H1 (cell line): ENCODE measurements at regions of chr12 and their contacts with region 1.

Region 1: DNA sequence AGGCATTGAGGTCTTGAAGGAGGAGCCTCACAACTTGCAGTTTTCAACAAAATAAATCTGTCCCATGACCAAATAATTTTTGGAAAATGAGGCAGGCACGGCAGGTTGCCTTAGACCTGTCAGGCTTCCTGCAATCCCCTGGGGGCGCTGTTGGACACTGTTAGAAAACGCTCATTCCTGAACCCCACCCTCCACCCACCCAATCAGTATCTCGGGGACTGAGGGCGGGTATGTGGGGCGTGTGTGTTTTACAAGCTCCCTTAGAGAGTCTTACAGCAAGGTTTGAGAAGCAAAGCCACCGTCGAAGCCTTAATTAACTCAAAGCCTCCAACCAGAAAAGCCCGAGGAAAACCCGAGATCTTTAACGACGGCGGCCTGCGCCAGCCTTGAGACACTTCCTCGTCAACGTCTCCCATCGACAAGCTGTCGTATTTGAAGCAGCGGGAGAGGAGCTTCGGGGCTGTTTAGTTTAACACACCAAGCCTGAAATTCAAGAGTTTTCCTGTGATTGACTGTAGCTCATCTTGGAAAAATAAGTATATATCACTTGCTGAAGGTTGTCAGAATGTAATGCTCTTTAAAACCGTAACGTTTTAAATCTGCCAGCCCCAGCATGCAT is 123.0 kb downstream of the GLT1D1 start:
- DNase-seq: peak; percentile 53 to 82
- H3K4me3 ChIP-seq: peak overlapping the region; percentile 10 to 57 (median 24); a peak in 4 of 8 replicates
- H3K27ac ChIP-seq: no peak overlapping the region
- H3K4me1 ChIP-seq: peaks cover 3 to 26% (median 11%) of the 10 kb centered on the region in 4 experiments; a peak in 6 of 7 replicates
- H3K27me3 ChIP-seq: peaks cover 0 to 6% (median 3%) of the 10 kb centered on the region in 4 experiments; a peak in 4 of 7 replicates
- CTCF ChIP-seq: peak; percentile 72 to 76 (median 76)
- EP300 ChIP-seq: no peak
- POLR2A ChIP-seq: no peak
- RAD21 ChIP-seq: peak; percentile 76 to 79

Region 2: DNA sequence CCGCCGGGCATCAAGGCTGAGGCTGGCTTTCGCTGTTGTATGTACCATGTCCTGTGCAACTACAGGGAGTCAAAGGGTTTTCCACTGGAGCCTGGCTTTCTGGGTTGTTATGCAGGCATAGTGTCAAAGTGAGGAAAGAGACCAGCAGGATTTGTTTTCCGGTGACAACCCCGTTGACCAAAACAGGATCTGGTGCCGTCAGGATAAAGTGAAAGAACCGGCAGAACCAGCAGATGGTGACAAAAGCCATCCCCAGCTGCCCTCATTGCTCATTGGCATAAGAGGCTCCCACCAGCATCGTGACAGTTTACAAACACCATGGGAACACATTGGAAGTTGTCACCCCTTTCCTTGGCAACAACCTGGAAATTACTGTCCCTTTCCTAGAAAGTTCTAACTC is 233.2 kb before region 1 on chr12:
- CTCF ChIA-PET with region 1: no interaction called
- POLR2A ChIA-PET with region 1: no interaction called
- DNase-seq: no peak
- H3K4me3 ChIP-seq: no peak overlapping the region
- H3K27ac ChIP-seq: no peak overlapping the region
- H3K4me1 ChIP-seq: no peaks in the 10 kb centered on the region
- H3K27me3 ChIP-seq: no peaks in the 10 kb centered on the region
- CTCF ChIP-seq: no peak
- EP300 ChIP-seq: no peak
- POLR2A ChIP-seq: no peak
- RAD21 ChIP-seq: peak in 1 of 2 experiments; percentile 34; a peak in 2 of 4 replicates

Region 3: DNA sequence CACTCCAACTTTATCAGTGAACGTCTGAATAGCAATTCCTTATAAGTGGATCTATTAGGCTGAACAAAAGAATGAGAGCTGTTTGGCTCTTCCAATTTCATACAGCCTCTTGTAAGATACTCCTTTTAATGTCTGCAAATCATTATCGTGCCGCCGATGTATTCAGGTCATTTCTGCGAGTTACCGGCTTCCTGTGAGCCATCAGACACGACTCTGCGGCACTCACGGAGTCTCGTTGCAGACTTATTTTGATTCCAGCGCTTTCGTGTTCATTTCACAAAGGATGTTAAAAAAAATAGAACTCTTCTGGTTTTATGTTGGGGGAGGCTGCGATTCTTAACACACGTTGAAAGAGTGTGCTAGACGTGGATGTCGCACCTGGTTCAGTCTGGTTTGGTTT is 16.3 kb before region 1 on chr12:
- CTCF ChIA-PET with region 1: interaction called, 26 read pairs
- POLR2A ChIA-PET with region 1: no interaction called
- DNase-seq: no peak
- H3K4me3 ChIP-seq: no peak overlapping the region
- H3K27ac ChIP-seq: no peak overlapping the region
- H3K4me1 ChIP-seq: peaks cover 0 to 9% (median 4%) of the 10 kb centered on the region in 4 experiments; a peak in 3 of 7 replicates
- H3K27me3 ChIP-seq: no peaks in the 10 kb centered on the region; a peak in 1 of 7 replicates
- CTCF ChIP-seq: no peak
- EP300 ChIP-seq: no peak
- POLR2A ChIP-seq: no peak
- RAD21 ChIP-seq: no peak

Region 4: GRCh38 chr12:128994854-128995253 is 18.6 kb after region 1 on chr12:
- CTCF ChIA-PET with region 1: interaction called, 22 read pairs
- POLR2A ChIA-PET with region 1: no interaction called
- DNase-seq: no peak
- H3K4me3 ChIP-seq: no peak overlapping the region
- H3K27ac ChIP-seq: no peak overlapping the region
- H3K4me1 ChIP-seq: no peaks in the 10 kb centered on the region
- H3K27me3 ChIP-seq: no peaks in the 10 kb centered on the region; a peak in 1 of 7 replicates
- CTCF ChIP-seq: no peak
- EP300 ChIP-seq: no peak
- POLR2A ChIP-seq: no peak
- RAD21 ChIP-seq: no peak

Region 5: DNA sequence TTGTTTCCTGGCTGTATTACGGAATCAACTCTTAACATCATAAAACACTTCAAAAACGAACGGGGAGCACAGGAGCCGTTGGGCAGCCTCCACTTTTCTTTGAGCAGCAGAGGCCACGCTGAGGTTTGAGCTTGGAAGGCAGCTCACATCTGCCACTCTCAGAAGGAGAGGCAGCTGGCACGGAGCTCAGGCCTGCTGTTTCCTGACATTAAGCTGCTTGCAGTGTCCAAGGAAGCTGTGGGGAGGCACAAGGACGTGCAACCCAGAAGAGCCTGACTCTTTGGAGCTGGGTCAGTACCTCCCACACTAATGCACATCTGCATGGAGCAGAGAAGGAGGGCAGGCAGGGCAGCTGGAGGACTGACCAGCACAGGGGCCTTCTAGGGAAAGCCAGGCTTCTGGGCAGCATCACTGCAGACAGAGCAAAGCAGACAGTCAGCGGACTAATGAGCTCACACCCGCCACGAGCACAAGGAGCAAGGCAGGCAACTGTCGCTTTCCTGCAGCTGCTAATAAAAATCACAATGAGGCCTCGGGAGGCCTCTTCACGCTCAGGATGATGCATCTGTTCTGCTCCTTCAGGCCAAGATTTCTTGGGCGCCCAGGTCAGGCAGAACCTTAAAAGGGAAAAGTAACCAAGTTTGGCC is 88.1 kb after region 1 on chr12:
- CTCF ChIA-PET with region 1: interaction called, 14 read pairs
- POLR2A ChIA-PET with region 1: no interaction called
- DNase-seq: no peak
- H3K4me3 ChIP-seq: no peak overlapping the region
- H3K27ac ChIP-seq: no peak overlapping the region
- H3K4me1 ChIP-seq: peaks cover 0 to 5% (median 2%) of the 10 kb centered on the region in 4 experiments; a peak in 3 of 7 replicates
- H3K27me3 ChIP-seq: no peaks in the 10 kb centered on the region; a peak in 1 of 7 replicates
- CTCF ChIP-seq: no peak
- EP300 ChIP-seq: no peak
- POLR2A ChIP-seq: no peak
- RAD21 ChIP-seq: no peak

Region 6: GRCh38 chr12:129069886-129070285 is 93.7 kb after region 1 on chr12:
- CTCF ChIA-PET with region 1: interaction called, 14 read pairs
- POLR2A ChIA-PET with region 1: no interaction called
- DNase-seq: peak in 1 of 2 experiments; percentile 79
- H3K4me3 ChIP-seq: no peak overlapping the region
- H3K27ac ChIP-seq: no peak overlapping the region
- H3K4me1 ChIP-seq: peaks cover 0 to 3% (median 2%) of the 10 kb centered on the region in 4 experiments; a peak in 2 of 7 replicates
- H3K27me3 ChIP-seq: no peaks in the 10 kb centered on the region; a peak in 2 of 7 replicates
- CTCF ChIP-seq: peak; percentile 54 to 87 (median 66)
- EP300 ChIP-seq: no peak
- POLR2A ChIP-seq: no peak
- RAD21 ChIP-seq: peak; percentile 69 to 73

Region 7: GRCh38 chr12:129162805-129163204 is 186.6 kb after region 1 on chr12:
- CTCF ChIA-PET with region 1: interaction called, 12 read pairs
- POLR2A ChIA-PET with region 1: no interaction called
- DNase-seq: no peak
- H3K4me3 ChIP-seq: no peak overlapping the region
- H3K27ac ChIP-seq: no peak overlapping the region
- H3K4me1 ChIP-seq: peaks cover 0 to 6% (median under 1%) of the 10 kb centered on the region in 4 experiments; a peak in 2 of 7 replicates
- H3K27me3 ChIP-seq: no peaks in the 10 kb centered on the region
- CTCF ChIP-seq: peak; percentile 3 to 47 (median 37); a peak in 2 of 4 replicates
- EP300 ChIP-seq: no peak
- POLR2A ChIP-seq: no peak
- RAD21 ChIP-seq: peak in 1 of 2 experiments; percentile 24; a peak in 1 of 4 replicates

Region 8: GRCh38 chr12:129911428-129912049 is 935.3 kb after region 1 on chr12:
- CTCF ChIA-PET with region 1: interaction called, 12 read pairs
- POLR2A ChIA-PET with region 1: no interaction called
- DNase-seq: peak in 1 of 2 experiments; percentile 77
- H3K4me3 ChIP-seq: no peak overlapping the region
- H3K27ac ChIP-seq: no peak overlapping the region
- H3K4me1 ChIP-seq: 0 out of 7 replicates have a peak, but pooled peaks cover 0 to 3% (median 0%) of the 10 kb centered on the region in 4 experiments
- H3K27me3 ChIP-seq: peaks cover 0 to 6% (median 6%) of the 10 kb centered on the region in 4 experiments; a peak in 5 of 7 replicates
- CTCF ChIP-seq: peak; percentile 92 to 94 (median 92)
- EP300 ChIP-seq: no peak
- POLR2A ChIP-seq: no peak
- RAD21 ChIP-seq: peak; percentile 100